ENCODE measurements at regions of chr2 and their contacts with region 1.

Region 1: GRCh38 chr2:149017116-149017985 is 21.1 kb upstream of the LYPD6B start:
- DNase-seq: peak; percentile 53
- ATAC-seq: peak; percentile 21
- H3K4me3 ChIP-seq: no peak overlapping the region
- H3K27ac ChIP-seq: no peak overlapping the region
- H3K4me1 ChIP-seq: peaks cover 34% of the 10 kb centered on the region
- H3K27me3 ChIP-seq: no peaks in the 10 kb centered on the region
- CTCF ChIP-seq: peak; percentile 82 to 88 (median 87); a peak in 5 of 6 replicates
- EP300 ChIP-seq: no peak
- POLR2A ChIP-seq: no peak
- RAD21 ChIP-seq: peak; percentile 99

Region 2: GRCh38 chr2:149006883-149007540 is 10.3 kb before region 1 on chr2:
- CTCF ChIA-PET with region 1: interaction called, 31 read pairs
- POLR2A ChIA-PET with region 1: no interaction called
- RAD21 ChIA-PET with region 1: interaction called, 5 read pairs
- SMC1A ChIA-PET with region 1: interaction called, 10 read pairs
- in situ Hi-C with region 1: no loop called
- intact Hi-C with region 1: no loop called
- DNase-seq: no peak
- ATAC-seq: peak; percentile 17
- H3K4me3 ChIP-seq: no peak overlapping the region
- H3K27ac ChIP-seq: no peak overlapping the region
- H3K4me1 ChIP-seq: no peaks in the 10 kb centered on the region; the same call in 1 of the 2 replicates
- H3K27me3 ChIP-seq: no peaks in the 10 kb centered on the region
- CTCF ChIP-seq: no peak
- EP300 ChIP-seq: no peak
- POLR2A ChIP-seq: no peak
- RAD21 ChIP-seq: no peak

Region 3: GRCh38 chr2:149040451-149040850 is 23.1 kb after region 1 on chr2:
- CTCF ChIA-PET with region 1: interaction called, 508 read pairs
- POLR2A ChIA-PET with region 1: interaction called, 3 read pairs
- RAD21 ChIA-PET with region 1: interaction called, 107 read pairs
- SMC1A ChIA-PET with region 1: interaction called, 327 read pairs
- in situ Hi-C with region 1: no loop called
- intact Hi-C with region 1: loop called (anchors 2 kb)
- DNase-seq: no peak
- ATAC-seq: peak; percentile 78
- H3K4me3 ChIP-seq: no peak overlapping the region
- H3K27ac ChIP-seq: no peak overlapping the region
- H3K4me1 ChIP-seq: peaks cover 17% of the 10 kb centered on the region
- H3K27me3 ChIP-seq: no peaks in the 10 kb centered on the region
- CTCF ChIP-seq: peak; percentile 52 to 78 (median 77)
- EP300 ChIP-seq: no peak
- POLR2A ChIP-seq: no peak
- RAD21 ChIP-seq: peak; percentile 61

Region 4: GRCh38 chr2:149087751-149088150 is 70.4 kb after region 1 on chr2:
- CTCF ChIA-PET with region 1: interaction called, 4 read pairs
- POLR2A ChIA-PET with region 1: no interaction called
- RAD21 ChIA-PET with region 1: interaction called, 3 read pairs
- SMC1A ChIA-PET with region 1: interaction called, 7 read pairs
- in situ Hi-C with region 1: no loop called
- intact Hi-C with region 1: loop called (anchors 5 kb)
- DNase-seq: no peak
- ATAC-seq: peak; percentile 58; the same call in 2 of the 3 replicates
- H3K4me3 ChIP-seq: no peak overlapping the region
- H3K27ac ChIP-seq: no peak overlapping the region
- H3K4me1 ChIP-seq: no peaks in the 10 kb centered on the region
- H3K27me3 ChIP-seq: no peaks in the 10 kb centered on the region
- CTCF ChIP-seq: peak; percentile 22 to 52 (median 33)
- EP300 ChIP-seq: no peak
- POLR2A ChIP-seq: no peak
- RAD21 ChIP-seq: peak; percentile 50

Region 5: DNA sequence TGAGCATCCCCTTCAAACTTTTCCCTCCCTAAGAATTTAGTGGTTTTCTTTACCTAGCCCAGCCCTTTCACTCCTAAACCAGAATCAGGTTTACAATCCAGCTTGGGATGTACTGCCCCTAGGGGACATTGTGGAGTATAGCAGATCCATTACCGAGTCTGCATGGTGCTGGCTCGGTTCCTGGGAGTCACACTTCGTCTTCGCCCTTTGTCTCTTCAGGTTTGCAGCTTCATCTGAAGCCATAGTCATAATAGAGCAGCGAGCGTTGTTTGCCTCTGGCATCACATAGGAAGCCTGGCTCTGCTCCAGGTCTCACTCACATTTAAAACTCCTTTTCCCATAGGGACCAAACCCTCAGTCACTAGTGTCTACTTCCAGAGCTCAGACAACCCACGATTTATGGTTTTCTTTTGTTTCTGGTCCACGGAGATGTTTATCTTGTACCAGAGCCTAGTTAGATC is 296.2 kb after region 1 on chr2:
- CTCF ChIA-PET with region 1: interaction called, 35 read pairs
- POLR2A ChIA-PET with region 1: no interaction called
- RAD21 ChIA-PET with region 1: interaction called, 23 read pairs
- SMC1A ChIA-PET with region 1: interaction called, 19 read pairs
- in situ Hi-C with region 1: loop called (anchors 5 kb)
- intact Hi-C with region 1: loop called (anchors 1 kb)
- DNase-seq: peak; percentile 9
- ATAC-seq: peak; percentile 94
- H3K4me3 ChIP-seq: no peak overlapping the region
- H3K27ac ChIP-seq: no peak overlapping the region
- H3K4me1 ChIP-seq: no peaks in the 10 kb centered on the region
- H3K27me3 ChIP-seq: no peaks in the 10 kb centered on the region
- CTCF ChIP-seq: peak; percentile 61 to 80 (median 77)
- EP300 ChIP-seq: no peak
- POLR2A ChIP-seq: no peak
- RAD21 ChIP-seq: peak; percentile 77

Region 6: GRCh38 chr2:149561309-149561926 is 544.1 kb after region 1 on chr2:
- CTCF ChIA-PET with region 1: interaction called, 166 read pairs
- POLR2A ChIA-PET with region 1: no interaction called
- RAD21 ChIA-PET with region 1: interaction called, 50 read pairs
- SMC1A ChIA-PET with region 1: interaction called, 84 read pairs
- in situ Hi-C with region 1: loop called (anchors 5 kb)
- intact Hi-C with region 1: loop called (anchors 1 kb)
- DNase-seq: no peak
- ATAC-seq: peak; percentile 57
- H3K4me3 ChIP-seq: no peak overlapping the region
- H3K27ac ChIP-seq: no peak overlapping the region
- H3K4me1 ChIP-seq: no peaks in the 10 kb centered on the region
- H3K27me3 ChIP-seq: no peaks in the 10 kb centered on the region
- CTCF ChIP-seq: peak; percentile 58 to 78 (median 74)
- EP300 ChIP-seq: no peak
- POLR2A ChIP-seq: no peak
- RAD21 ChIP-seq: peak; percentile 88